CD4-positive, alpha-beta T cell (primary cell): ENCODE measurements at regions of chr20 and their contacts with region 1.

Region 1: DNA sequence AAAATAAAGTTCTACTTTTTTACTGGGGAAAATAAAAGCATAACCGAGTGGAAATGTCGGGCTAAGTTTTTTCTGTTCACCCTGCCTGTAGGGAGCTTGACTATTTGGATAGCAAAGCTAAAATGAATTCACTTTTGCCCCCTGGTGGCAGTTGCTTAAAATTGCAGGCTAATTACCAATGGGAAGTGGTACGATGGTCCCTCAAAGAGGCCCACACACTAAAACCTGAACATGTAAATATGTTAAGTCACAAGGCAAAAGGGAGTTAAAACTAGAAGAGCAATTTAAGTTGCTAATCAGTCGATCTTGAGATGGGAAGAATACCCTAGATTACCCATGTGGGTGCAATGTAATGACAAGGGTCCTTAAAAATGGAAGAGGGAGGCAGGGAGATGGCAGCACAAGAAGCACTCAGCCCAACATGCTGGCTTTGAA is 916 bp upstream of the SUN5 start:
- DNase-seq: peak in 4 of 14 experiments; percentile 43 to 66 (median 61)
- ATAC-seq: no peak
- H3K4me3 ChIP-seq: no peak overlapping the region
- H3K4me3 Mint-ChIP-seq: no peak overlapping the region
- H3K27ac ChIP-seq: no peak overlapping the region
- H3K27ac Mint-ChIP-seq: peak overlapping the region; percentile 35
- H3K4me1 ChIP-seq: peaks cover 18% of the 10 kb centered on the region
- H3K4me1 Mint-ChIP-seq: peaks cover 37% of the 10 kb centered on the region
- H3K27me3 ChIP-seq: no peaks in the 10 kb centered on the region
- H3K27me3 Mint-ChIP-seq: no peaks in the 10 kb centered on the region
- CTCF ChIP-seq: peak; percentile 65

Region 2: GRCh38 chr20:32830437-32830836 is 174.7 kb before region 1 on chr20:
- CTCF ChIA-PET with region 1: no interaction called
- POLR2A ChIA-PET with region 1: no interaction called
- intact Hi-C with region 1: no loop called
- DNase-seq: peak in 3 of 14 experiments; percentile 18 to 61 (median 54)
- ATAC-seq: peak; percentile 44
- H3K4me3 ChIP-seq: no peak overlapping the region
- H3K4me3 Mint-ChIP-seq: peak overlapping the region; percentile 59
- H3K27ac ChIP-seq: peak overlapping the region in 1 of 2 donors; percentile 36
- H3K27ac Mint-ChIP-seq: peak overlapping the region; percentile 77
- H3K4me1 ChIP-seq: peaks cover 34% of the 10 kb centered on the region
- H3K4me1 Mint-ChIP-seq: peaks cover 68% of the 10 kb centered on the region
- H3K27me3 ChIP-seq: no peaks in the 10 kb centered on the region
- H3K27me3 Mint-ChIP-seq: no peaks in the 10 kb centered on the region
- CTCF ChIP-seq: no peak

Region 3: DNA sequence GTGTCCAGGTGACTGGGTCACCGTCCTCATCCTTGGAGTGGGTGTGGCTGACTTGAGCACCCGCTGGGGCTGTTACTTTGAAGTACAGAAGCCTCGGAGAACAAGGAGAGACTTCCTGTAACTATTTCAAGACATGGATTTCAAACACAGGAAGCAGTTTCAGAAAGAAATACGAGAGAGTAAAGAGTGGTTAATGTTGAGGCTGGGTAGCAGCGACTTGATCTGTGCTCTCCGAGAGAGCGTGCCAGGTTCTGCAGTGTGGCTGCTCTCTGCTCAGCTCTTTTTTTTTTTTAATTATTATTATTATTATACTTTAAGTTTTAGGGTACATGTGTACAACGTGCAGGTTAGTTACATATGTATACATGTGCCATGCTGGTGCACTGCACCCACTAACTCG is 164.0 kb before region 1 on chr20:
- CTCF ChIA-PET with region 1: no interaction called
- POLR2A ChIA-PET with region 1: no interaction called
- intact Hi-C with region 1: no loop called
- DNase-seq: no peak
- ATAC-seq: peak; percentile 54
- H3K4me3 ChIP-seq: no peak overlapping the region
- H3K4me3 Mint-ChIP-seq: no peak overlapping the region
- H3K27ac ChIP-seq: peak overlapping the region in 1 of 2 donors; percentile 16
- H3K27ac Mint-ChIP-seq: peak overlapping the region; percentile 87
- H3K4me1 ChIP-seq: peaks cover 25% of the 10 kb centered on the region
- H3K4me1 Mint-ChIP-seq: peaks cover 75% of the 10 kb centered on the region
- H3K27me3 ChIP-seq: no peaks in the 10 kb centered on the region
- H3K27me3 Mint-ChIP-seq: no peaks in the 10 kb centered on the region
- CTCF ChIP-seq: no peak

Region 4: GRCh38 chr20:32871627-32872160 is 133.5 kb before region 1 on chr20:
- CTCF ChIA-PET with region 1: no interaction called
- POLR2A ChIA-PET with region 1: no interaction called
- intact Hi-C with region 1: no loop called
- DNase-seq: no peak
- ATAC-seq: no peak
- H3K4me3 ChIP-seq: no peak overlapping the region
- H3K4me3 Mint-ChIP-seq: no peak overlapping the region
- H3K27ac ChIP-seq: no peak overlapping the region
- H3K27ac Mint-ChIP-seq: no peak overlapping the region
- H3K4me1 ChIP-seq: no peaks in the 10 kb centered on the region
- H3K4me1 Mint-ChIP-seq: no peaks in the 10 kb centered on the region
- H3K27me3 ChIP-seq: no peaks in the 10 kb centered on the region
- H3K27me3 Mint-ChIP-seq: no peaks in the 10 kb centered on the region
- CTCF ChIP-seq: no peak

Region 5: GRCh38 chr20:32966881-32967781 is 38.0 kb before region 1 on chr20:
- CTCF ChIA-PET with region 1: interaction called, 5 read pairs
- POLR2A ChIA-PET with region 1: interaction called, 9 read pairs
- intact Hi-C with region 1: loop called in 1 of 2 experiments (anchors 5 kb)
- DNase-seq: peak; percentile 35 to 91 (median 52)
- ATAC-seq: peak; percentile 38
- H3K4me3 ChIP-seq: no peak overlapping the region
- H3K4me3 Mint-ChIP-seq: peak overlapping the region; percentile 85
- H3K27ac ChIP-seq: peak overlapping the region; percentile 87 to 98
- H3K27ac Mint-ChIP-seq: no peak overlapping the region
- H3K4me1 ChIP-seq: peaks cover 90% of the 10 kb centered on the region
- H3K4me1 Mint-ChIP-seq: peaks cover 85% of the 10 kb centered on the region
- H3K27me3 ChIP-seq: no peaks in the 10 kb centered on the region
- H3K27me3 Mint-ChIP-seq: no peaks in the 10 kb centered on the region
- CTCF ChIP-seq: no peak